Left lung (tissue), 14 donors: ENCODE measurements at regions of chr21 and their contacts with region 1.

Region 1: DNA sequence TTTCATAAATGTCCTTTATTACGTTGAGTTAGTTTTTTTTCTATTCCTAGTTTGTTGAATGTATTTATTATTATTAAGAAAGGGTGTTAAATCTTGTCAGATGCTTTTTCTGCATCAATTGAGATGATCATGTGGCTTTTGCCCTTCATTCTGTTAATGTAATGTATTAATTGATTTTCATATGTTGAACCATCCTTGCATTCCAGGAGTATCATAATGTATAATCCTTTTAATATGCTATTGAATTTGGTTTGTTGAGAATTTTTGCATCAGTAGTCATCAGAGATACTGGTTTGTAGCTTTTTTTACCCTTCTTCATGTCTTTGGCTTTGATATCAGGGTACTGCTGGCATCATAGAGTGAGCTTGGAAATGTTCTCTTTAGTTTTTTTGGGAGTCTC is 100.0 kb downstream of the POFUT2 start:
- DNase-seq: no peak
- ATAC-seq: no peak
- H3K4me3 ChIP-seq: no peak overlapping the region
- H3K27ac ChIP-seq: no peak overlapping the region
- H3K4me1 ChIP-seq: no peaks in the 10 kb centered on the region
- H3K27me3 ChIP-seq: no peaks in the 10 kb centered on the region
- CTCF ChIP-seq: no peak

Region 2: GRCh38 chr21:44982558-44983244 is 204.9 kb before region 1 on chr21:
- intact Hi-C with region 1: no loop called
- DNase-seq: peak in 3 of 4 donors; percentile 36 to 77 (median 66)
- ATAC-seq: peak; percentile 48
- H3K4me3 ChIP-seq: no peak overlapping the region
- H3K27ac ChIP-seq: no peak overlapping the region
- H3K4me1 ChIP-seq: peaks cover 0 to 3% of the 10 kb centered on the region in 2 donors
- H3K27me3 ChIP-seq: no peaks in the 10 kb centered on the region
- CTCF ChIP-seq: no peak

Region 3: DNA sequence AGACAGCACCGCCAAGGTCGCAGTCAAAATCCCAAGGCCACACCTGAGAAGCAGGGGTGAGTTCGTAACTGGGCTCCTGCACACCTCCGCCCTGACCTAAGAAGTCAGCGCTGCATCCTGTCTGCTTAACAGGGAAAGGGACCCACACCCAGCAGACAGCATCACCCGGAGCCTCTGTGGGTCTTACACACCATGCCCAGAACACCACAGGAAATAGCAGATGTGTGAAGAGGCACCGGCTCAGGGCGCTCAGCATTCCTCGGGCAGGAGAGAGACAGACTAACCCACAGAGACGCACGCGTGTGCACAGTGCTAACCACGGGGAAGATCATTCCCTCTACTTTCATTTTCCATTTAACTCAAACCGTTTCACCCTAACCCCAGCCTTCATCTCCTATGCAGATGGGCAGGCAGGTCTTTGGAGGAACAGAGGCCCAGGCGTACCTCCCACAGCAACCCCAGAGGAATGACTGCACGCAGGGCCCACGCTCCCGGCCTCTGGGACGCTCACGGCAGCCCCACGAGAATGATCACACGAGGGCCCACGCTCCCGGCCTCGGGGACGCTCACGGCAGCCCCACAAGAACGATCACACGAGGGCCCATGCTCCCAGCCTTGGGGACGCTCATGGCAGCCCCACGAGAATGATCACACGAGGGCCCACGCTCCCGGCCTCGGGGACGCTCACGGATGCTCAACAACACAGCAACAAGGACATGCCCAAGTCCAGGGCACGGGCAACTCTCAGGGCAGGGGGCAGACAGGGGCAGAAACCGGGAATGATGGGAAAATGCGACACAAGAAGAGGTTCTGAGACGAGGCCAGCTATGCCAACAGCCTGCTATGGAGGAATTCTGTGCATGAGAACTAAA is 79.1 kb after region 1 on chr21:
- intact Hi-C with region 1: loop called in 1 of 2 experiments (anchors 10 kb)
- DNase-seq: peak in 1 of 4 donors; percentile 31
- ATAC-seq: peak; percentile 11
- H3K4me3 ChIP-seq: no peak overlapping the region
- H3K27ac ChIP-seq: no peak overlapping the region
- H3K4me1 ChIP-seq: no peaks in the 10 kb centered on the region
- H3K27me3 ChIP-seq: no peaks in the 10 kb centered on the region
- CTCF ChIP-seq: no peak